Dorsolateral prefrontal cortex (tissue), 120 donors: ENCODE measurements at regions of chr4 and their contacts with region 1.

Region 1: DNA sequence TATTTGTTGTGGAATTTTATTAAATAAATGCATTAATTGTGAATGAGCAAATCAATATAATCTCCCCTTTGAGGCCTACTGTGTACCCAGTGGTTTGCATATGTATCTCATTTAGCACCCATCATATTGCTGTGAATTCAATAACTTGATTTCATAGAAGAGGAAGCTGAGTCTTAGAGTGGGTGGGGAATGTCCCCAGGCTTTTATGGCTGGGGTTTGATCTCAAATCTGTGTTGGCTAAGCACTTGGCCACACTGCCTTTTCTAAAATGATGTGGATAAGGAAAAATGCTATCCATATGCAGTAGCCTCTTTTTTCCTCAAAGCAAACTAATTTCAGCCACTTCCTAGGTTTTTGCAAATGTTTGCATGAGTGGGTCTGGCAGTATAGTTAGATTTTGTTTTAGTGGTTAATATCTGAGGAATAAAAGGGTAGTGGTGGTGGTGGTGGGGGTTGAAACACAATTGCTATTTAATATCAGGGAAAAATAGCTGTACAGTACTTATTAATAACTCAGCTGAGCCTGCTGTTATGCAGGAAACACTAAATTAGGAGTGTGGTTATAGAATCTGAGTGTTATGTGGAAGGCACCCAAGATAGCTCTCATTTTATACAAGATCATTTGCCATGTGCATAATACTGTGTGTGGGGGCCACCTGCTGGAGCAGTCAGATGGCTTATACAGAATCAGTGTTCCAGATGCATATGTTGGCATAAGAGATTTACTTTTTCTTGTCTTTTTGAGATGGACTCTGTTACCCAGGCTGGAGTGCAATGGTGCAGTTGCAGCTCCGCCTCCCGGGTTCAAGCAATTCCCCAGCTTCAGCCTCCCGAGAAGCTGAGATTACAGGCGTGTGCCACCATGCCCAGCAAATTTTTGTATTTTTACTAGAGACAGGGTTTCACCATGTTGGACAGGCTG is 108.0 kb downstream of the TMEM131L start:
- DNase-seq: peak; percentile 7 to 95 (median 80)
- H3K4me3 ChIP-seq: no peak overlapping the region
- H3K27ac ChIP-seq: peak overlapping the region in 15 of 59 donors; percentile 12 to 69 (median 44)
- H3K27me3 ChIP-seq: no peaks in the 10 kb centered on the region
- CTCF ChIP-seq: peak in 55 of 56 donors; percentile 55 to 85 (median 73)

Region 2: GRCh38 chr4:152843481-152844090 is 730.6 kb before region 1 on chr4:
- intact Hi-C with region 1: loop called (anchors 10 kb)
- DNase-seq: no peak
- H3K4me3 ChIP-seq: no peak overlapping the region
- H3K27ac ChIP-seq: no peak overlapping the region
- H3K27me3 ChIP-seq: no peaks in the 10 kb centered on the region
- CTCF ChIP-seq: no peak

Region 3: GRCh38 chr4:153083447-153083947 is 490.6 kb before region 1 on chr4:
- intact Hi-C with region 1: loop called in 1 of 2 experiments (anchors 5 kb)
- DNase-seq: peak in 9 of 10 donors; percentile 42 to 74 (median 59)
- H3K4me3 ChIP-seq: peak overlapping the region in 4 of 59 donors; percentile 4 to 12 (median 6)
- H3K27ac ChIP-seq: peak overlapping the region in 57 of 59 donors; percentile 10 to 100 (median 97)
- H3K27me3 ChIP-seq: no peaks in the 10 kb centered on the region
- CTCF ChIP-seq: peak; percentile 60 to 93 (median 81)

Region 4: DNA sequence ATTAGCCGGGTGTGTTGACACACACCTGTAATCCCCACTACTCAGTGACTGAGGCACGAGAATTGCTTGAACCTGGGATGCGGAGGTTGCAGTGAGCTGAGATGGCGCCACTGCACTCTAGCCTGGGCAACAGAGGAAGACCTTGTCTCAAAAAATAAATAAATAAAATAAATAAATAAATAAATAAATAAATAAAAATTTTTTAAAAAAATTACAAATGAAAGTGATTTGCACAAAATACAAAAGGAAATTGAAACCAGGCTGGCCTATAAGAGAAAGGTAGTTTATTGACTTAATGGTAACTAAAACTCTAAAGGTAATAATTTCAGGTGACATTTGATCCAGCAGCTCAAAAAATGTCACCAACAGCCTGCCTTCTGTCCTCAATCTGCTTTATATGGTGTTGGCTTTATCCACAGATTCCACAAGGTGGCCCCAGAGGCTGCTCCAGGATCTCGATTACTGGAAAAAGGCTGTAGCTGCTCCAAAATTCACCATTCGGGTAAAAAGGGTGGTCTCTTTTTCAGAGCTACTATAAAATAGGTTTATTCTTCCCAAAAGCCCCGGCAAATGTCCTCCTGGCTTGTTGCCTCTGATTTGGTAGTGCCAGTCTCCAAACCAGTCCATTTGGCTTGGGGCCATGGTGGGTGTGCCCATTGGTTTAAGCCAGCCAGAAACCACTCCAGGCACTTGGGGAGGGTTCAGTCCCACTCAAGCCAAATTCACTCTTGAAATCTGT is 431.3 kb before region 1 on chr4:
- intact Hi-C with region 1: loop called (anchors 5 kb)
- DNase-seq: peak; percentile 52 to 87 (median 72)
- H3K4me3 ChIP-seq: peak overlapping the region in 17 of 59 donors; percentile 1 to 32 (median 11)
- H3K27ac ChIP-seq: peak overlapping the region in 55 of 59 donors; percentile 2 to 100 (median 74)
- H3K27me3 ChIP-seq: no peaks in the 10 kb centered on the region
- CTCF ChIP-seq: peak; percentile 65 to 96 (median 89)

Region 5: GRCh38 chr4:153432968-153433753 is 141.0 kb before region 1 on chr4:
- intact Hi-C with region 1: loop called in 1 of 2 experiments (anchors 5 kb)
- DNase-seq: no peak
- H3K4me3 ChIP-seq: peak overlapping the region in 1 of 59 donors; percentile 15
- H3K27ac ChIP-seq: peak overlapping the region in 3 of 59 donors; percentile 48 to 54 (median 53)
- H3K27me3 ChIP-seq: no peaks in the 10 kb centered on the region
- CTCF ChIP-seq: peak in 50 of 56 donors; percentile 2 to 67 (median 44)

Region 6: DNA sequence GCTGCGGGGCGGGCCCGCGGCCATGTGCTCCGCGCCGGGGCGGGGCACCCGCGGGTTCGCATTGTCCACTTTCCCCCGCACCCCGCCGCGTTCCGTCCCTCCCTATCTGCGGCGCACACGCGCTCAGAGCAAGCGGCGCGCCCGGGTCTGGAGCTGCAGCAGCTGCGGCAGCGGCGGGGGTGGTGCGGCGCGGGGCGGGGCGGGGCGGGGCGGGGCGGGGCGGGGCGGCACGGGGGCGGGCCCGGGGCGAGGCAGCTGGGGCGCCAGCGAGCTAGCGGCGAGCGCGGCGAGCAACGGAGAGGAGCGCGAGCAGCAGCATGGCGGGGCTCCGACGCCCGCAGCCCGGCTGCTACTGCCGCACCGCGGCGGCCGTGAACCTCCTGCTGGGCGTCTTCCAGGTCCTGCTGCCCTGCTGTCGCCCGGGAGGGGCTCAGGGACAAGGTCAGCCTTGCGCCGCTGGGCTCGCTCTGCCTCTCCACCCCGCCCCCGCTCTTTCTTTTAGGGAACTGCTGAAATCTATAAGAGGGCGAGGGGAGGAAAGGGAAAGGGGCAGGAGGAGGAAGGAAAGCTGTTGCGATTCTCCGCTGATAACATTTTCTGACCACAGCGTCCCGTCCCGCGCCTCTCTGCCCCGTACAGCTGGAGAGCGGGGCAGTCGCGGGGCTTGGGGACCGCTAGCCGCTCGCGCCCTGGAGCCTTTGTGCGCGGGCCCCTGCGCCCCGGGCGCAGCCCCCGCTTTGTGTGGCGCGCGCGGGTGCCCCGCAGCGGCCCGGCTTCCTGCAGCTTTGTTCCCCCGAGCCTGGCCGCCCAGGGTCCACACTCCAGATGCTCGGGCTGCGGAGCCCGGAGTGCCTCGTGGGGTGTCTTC is 107.8 kb before region 1 on chr4 and contains the start of gene TMEM131L:
- intact Hi-C with region 1: loop called (anchors 2 to 5 kb)
- DNase-seq: peak; percentile 13 to 84 (median 66)
- H3K4me3 ChIP-seq: peak within 1 kb of the TSS; percentile 57 to 90 (median 82)
- H3K27ac ChIP-seq: peak within 1 kb of the TSS in 58 of 59 donors; percentile 7 to 85 (median 72)
- H3K27me3 ChIP-seq: no peaks in the 10 kb centered on the region
- CTCF ChIP-seq: peak in 32 of 56 donors; percentile 3 to 43 (median 26)
- total RNA-seq, gene TMEM131L: 3.8 to 16.5 (median 8.7) TPM

Region 7: DNA sequence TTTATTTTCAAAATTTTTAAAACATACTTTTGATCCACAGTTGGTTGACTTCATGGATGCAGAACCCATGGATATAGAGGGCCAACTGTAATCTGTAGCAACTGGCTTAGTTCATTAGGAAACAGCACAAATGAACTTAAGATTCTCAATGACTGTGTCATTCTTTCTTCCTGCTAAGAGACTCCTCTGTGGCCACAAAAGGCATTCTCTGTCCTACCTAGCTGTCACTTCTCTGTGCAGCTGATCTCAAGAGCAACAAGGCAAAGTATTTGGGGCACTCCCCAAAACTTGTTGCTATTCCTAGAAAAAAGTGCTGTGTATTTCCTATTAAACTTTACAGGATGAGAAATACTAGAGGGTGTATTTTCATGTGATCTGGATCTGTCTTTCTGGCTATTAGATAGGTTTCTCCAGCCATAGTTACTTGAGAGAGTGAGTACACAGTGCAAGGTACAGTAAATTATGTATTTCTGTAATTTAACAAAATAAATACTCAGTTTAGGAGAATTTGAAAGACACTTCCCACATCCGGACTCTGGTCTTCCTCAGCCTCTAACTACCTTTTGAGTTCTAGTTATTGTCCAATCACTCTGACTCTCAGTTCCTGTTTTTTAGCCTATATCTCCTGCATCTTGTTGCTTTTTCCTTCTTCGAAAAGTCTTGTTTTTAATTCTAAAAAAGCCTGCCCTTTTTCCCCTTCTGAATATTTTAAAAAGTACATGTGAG is 131.8 kb after region 1 on chr4:
- intact Hi-C with region 1: no loop called
- DNase-seq: no peak
- H3K4me3 ChIP-seq: no peak overlapping the region
- H3K27ac ChIP-seq: no peak overlapping the region
- H3K27me3 ChIP-seq: peaks cover 0 to 9% (median 0%) of the 10 kb centered on the region in 45 donors
- CTCF ChIP-seq: no peak

Region 8: GRCh38 chr4:154231806-154232478 is 657.8 kb after region 1 on chr4:
- intact Hi-C with region 1: no loop called
- DNase-seq: no peak
- H3K4me3 ChIP-seq: no peak overlapping the region
- H3K27ac ChIP-seq: no peak overlapping the region
- H3K27me3 ChIP-seq: peaks cover 0 to 5% (median 0%) of the 10 kb centered on the region in 45 donors
- CTCF ChIP-seq: no peak

Region 9: GRCh38 chr4:155473420-155474095 is 1899.4 kb after region 1 on chr4:
- intact Hi-C with region 1: no loop called
- DNase-seq: no peak
- H3K4me3 ChIP-seq: no peak overlapping the region
- H3K27ac ChIP-seq: no peak overlapping the region
- H3K27me3 ChIP-seq: peaks cover 0 to 2% (median 0%) of the 10 kb centered on the region in 45 donors
- CTCF ChIP-seq: no peak